Right ventricle myocardium inferior (tissue), 1 donor: ENCODE measurements at regions of chr12 and their contacts with region 1.

Region 1: DNA sequence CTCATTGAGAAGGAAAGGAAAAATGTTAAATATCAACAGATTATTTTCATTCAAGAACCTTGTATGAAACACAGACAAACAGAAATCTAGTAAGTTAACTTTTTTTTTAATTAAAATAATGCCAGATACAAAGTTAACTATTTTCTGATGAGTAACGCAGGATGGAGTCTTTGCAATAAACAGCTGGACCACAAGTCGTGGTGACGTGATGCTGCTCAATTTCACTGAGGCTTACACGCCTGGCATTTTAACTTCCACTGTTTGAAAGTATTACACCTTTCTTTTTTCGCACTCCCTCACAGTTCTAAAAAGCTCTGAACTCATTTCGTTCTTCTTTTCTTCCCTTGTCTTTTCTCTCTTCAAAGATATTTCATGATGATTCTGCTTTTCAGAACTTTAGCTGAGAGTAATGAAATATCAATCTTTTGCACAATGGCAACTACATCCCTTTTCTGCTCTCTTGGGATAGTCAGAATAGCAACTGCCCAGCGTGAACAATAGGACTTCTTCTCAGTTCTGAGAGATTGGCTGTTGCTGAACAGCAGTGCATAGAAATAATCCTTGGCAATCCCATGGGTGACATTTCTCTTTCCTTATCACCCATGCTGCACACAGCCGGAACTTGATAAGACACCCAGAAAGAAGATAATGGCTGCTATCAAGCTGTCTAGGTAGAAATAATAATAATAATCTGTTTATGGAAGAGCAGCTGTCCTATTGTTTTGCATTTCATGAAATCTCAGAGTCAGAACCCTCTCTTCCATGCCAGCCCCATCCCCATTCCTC is 160.5 kb downstream of the BTG1 start:
- DNase-seq: no peak
- ATAC-seq: no peak

Region 2: DNA sequence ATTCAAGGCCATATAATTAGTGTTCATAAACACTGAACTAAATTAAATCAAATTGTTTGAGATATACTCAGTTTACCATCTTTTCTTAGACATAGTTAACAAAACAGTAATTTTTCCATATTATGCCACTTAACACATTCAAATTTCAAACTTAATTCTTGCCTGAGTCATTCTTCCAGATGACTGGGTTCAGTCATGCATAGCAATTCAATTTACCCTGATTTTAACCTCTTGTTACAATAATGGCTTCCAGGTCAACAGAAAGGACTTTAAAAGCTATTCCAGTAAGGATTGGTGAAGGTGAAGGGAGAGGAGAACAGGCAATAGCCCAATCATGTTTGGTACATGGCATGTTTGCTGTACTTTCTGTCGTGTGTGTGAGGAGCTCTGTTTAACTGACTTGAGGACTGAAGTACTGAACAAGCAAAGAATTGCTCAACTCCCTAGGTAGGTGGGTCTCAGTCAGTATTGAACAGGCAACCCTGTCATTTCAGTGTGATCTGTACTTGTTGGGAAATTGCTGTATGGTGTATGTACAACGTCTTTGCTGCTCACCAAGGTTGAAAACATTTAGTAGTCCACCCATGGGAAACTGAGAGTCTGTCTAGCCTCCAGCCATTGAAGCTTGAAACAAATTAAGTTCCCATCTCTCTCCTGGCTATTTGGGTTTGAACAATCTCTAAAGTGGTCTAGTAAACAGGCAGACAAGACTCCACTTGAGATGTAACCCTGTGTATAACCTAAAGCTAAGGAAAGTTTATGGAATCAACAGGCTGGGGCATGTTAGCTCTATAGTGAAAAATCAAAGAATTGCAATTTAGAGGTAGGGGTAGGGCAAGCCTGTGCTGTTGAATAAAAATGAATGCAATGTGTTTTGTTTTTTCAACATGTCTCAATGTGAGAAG is 166.7 kb before region 1 on chr12:
- intact Hi-C with region 1: loop called (anchors 5 kb)
- DNase-seq: no peak
- ATAC-seq: no peak

Region 3: GRCh38 chr12:91965781-91966180 is 19.4 kb before region 1 on chr12:
- intact Hi-C with region 1: no loop called
- DNase-seq: no peak
- ATAC-seq: no peak

Region 4: GRCh38 chr12:92028441-92028709 is 43.2 kb after region 1 on chr12:
- intact Hi-C with region 1: loop called (anchors 5 kb)
- DNase-seq: no peak
- ATAC-seq: no peak

Region 5: GRCh38 chr12:92324849-92325500 is 339.8 kb after region 1 on chr12:
- intact Hi-C with region 1: no loop called
- DNase-seq: no peak
- ATAC-seq: no peak